PC-9 (cell line): ENCODE measurements at regions of chr5 and their contacts with region 1.

Region 1: DNA sequence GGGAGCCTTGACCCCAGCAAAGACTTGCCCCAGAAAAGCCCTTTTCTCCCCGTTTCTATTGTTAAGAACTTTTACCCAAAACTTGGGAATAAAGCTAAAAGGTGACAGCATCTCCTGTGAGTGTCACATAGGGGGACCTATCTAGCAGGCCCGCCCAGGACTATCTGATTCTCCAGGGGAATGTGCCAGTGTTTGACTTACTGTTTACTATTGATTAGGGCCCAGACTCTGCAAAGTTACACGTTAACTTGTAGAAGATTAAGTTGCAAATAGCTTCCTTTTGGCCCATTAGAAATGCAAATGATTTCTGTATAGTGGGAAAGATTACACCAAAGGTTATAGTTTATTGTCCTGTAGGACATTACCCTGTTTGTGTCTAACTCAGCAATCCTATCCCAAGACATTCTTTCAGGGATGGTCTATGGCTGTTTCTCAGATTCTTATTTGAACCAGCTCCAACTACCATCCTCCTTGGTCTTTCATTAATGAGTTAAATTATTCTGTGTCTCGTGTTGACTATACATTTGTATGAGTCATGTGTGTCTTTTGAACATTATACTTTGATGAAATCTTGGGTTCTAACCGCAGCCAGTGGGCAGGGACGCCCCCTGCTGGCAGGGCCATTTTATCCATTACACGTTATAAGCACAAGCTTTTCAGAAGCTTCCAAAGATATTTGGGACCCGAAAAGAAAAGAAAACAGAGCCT is 60.7 kb downstream of the HRH2 start:
- DNase-seq: peak in 1 of 2 experiments; percentile 18
- H3K4me3 ChIP-seq: no peak overlapping the region
- H3K27ac ChIP-seq: no peak overlapping the region
- H3K4me1 ChIP-seq: no peaks in the 10 kb centered on the region
- H3K27me3 ChIP-seq: peaks cover 56% of the 10 kb centered on the region
- CTCF ChIP-seq: peak; percentile 86

Region 2: GRCh38 chr5:175534070-175534932 is 184.3 kb before region 1 on chr5:
- CTCF ChIA-PET with region 1: no interaction called
- POLR2A ChIA-PET with region 1: no interaction called
- intact Hi-C with region 1: loop called (anchors 2 kb)
- DNase-seq: peak; percentile 53 to 81
- H3K4me3 ChIP-seq: no peak overlapping the region
- H3K27ac ChIP-seq: no peak overlapping the region
- H3K4me1 ChIP-seq: no peaks in the 10 kb centered on the region
- H3K27me3 ChIP-seq: peaks cover 15% of the 10 kb centered on the region
- CTCF ChIP-seq: peak; percentile 96